AG04450 (cell line): ENCODE measurements at regions of chr15 and their contacts with region 1.

Region 1: GRCh38 chr15:83564975-83565532 is 88.9 kb upstream of the ADAMTSL3 start:
- DNase-seq: no peak
- H3K4me3 ChIP-seq: no peak overlapping the region
- H3K27ac ChIP-seq: no peak overlapping the region
- H3K27me3 ChIP-seq: no peaks in the 10 kb centered on the region
- CTCF ChIP-seq: no peak

Region 2: DNA sequence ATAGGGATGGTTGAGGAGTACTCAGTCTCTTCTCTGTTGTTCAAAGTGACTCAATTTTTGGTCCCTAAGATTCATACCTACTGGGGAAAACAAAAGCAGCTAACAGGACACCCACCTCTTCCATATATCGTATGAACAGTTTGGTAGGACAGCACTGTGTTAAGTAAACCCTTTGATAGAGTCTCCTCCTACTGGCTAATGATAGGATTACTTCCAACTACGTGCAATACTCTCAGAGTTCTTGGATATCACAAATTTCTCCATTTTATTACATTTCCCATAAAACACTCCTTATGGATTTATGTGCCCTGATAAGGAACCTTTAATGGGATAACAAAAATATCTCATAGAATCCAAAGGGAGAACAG is 470.3 kb after region 1 on chr15:
- CTCF ChIA-PET with region 1: interaction called, 10 read pairs
- POLR2A ChIA-PET with region 1: no interaction called
- DNase-seq: peak; percentile 7
- H3K4me3 ChIP-seq: no peak overlapping the region
- H3K27ac ChIP-seq: no peak overlapping the region
- H3K27me3 ChIP-seq: no peaks in the 10 kb centered on the region
- CTCF ChIP-seq: peak; percentile 63

Region 3: GRCh38 chr15:84955089-84955848 is 1390.2 kb after region 1 on chr15:
- CTCF ChIA-PET with region 1: interaction called, 10 read pairs
- POLR2A ChIA-PET with region 1: no interaction called
- DNase-seq: peak; percentile 52
- H3K4me3 ChIP-seq: peak overlapping the region; percentile 23; the same call in 1 of the 2 replicates
- H3K27ac ChIP-seq: no peak overlapping the region
- H3K27me3 ChIP-seq: no peaks in the 10 kb centered on the region
- CTCF ChIP-seq: peak; percentile 94